Activated CD4-positive, alpha-beta T cell treated with anti-CD3 and anti-CD28 coated beads for 36 hours (primary cell): ENCODE measurements at regions of chr2 and their contacts with region 1.

Region 1: GRCh38 chr2:196263181-196263747 is 91.9 kb upstream of the STK17B start:
- DNase-seq: peak; percentile 51
- ATAC-seq: peak; percentile 62
- H3K4me3 Mint-ChIP-seq: peak overlapping the region; percentile 70
- H3K27ac Mint-ChIP-seq: peak overlapping the region; percentile 95
- H3K4me1 Mint-ChIP-seq: peaks cover 86% of the 10 kb centered on the region
- H3K27me3 Mint-ChIP-seq: no peaks in the 10 kb centered on the region

Region 2: GRCh38 chr2:196171248-196171871 is 91.9 kb before region 1 on chr2 and contains the start of gene STK17B:
- CTCF ChIA-PET with region 1: interaction called, 6 read pairs
- POLR2A ChIA-PET with region 1: interaction called, 7 read pairs
- intact Hi-C with region 1: loop called (anchors 1 to 2 kb)
- DNase-seq: peak; percentile 99
- ATAC-seq: peak; percentile 76
- H3K4me3 Mint-ChIP-seq: peak within 1 kb of the TSS; percentile 92
- H3K27ac Mint-ChIP-seq: peak within 1 kb of the TSS; percentile 98
- H3K4me1 Mint-ChIP-seq: peaks cover 38% of the 10 kb centered on the region
- H3K27me3 Mint-ChIP-seq: no peaks in the 10 kb centered on the region
- total RNA-seq, gene STK17B: 159 to 178 TPM

Region 3: GRCh38 chr2:196205881-196206435 is 57.3 kb before region 1 on chr2:
- CTCF ChIA-PET with region 1: interaction called, 6 read pairs
- POLR2A ChIA-PET with region 1: interaction called, 4 read pairs
- intact Hi-C with region 1: loop called (anchors 1 kb)
- DNase-seq: no peak
- ATAC-seq: no peak
- H3K4me3 Mint-ChIP-seq: no peak overlapping the region
- H3K27ac Mint-ChIP-seq: peak overlapping the region; percentile 35
- H3K4me1 Mint-ChIP-seq: peaks cover 45% of the 10 kb centered on the region
- H3K27me3 Mint-ChIP-seq: no peaks in the 10 kb centered on the region

Region 4: DNA sequence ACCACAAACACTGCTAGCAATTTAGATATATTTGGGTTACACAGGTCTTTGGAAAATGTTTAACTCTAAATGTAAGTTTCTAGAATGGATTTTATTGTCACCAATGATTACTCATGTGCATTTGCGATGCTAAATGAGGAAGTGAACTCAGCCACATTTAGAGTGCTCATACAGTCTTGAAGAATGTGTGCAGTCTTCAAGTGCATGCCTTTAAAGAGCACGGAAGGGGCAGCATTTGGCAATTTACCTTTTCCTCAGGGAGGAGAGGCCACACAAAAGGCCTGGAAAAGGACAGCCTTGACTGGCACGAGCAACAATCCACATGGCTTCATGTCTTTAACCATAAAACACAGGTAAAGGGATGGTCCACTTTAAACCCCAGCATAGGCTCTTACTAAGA is 13.4 kb before region 1 on chr2:
- CTCF ChIA-PET with region 1: interaction called, 15 read pairs
- POLR2A ChIA-PET with region 1: interaction called, 6 read pairs
- intact Hi-C with region 1: loop called in 1 of 2 experiments (anchors 1 kb)
- DNase-seq: no peak
- ATAC-seq: peak; percentile 24
- H3K4me3 Mint-ChIP-seq: no peak overlapping the region
- H3K27ac Mint-ChIP-seq: peak overlapping the region; percentile 72
- H3K4me1 Mint-ChIP-seq: peaks cover 88% of the 10 kb centered on the region
- H3K27me3 Mint-ChIP-seq: no peaks in the 10 kb centered on the region

Region 5: DNA sequence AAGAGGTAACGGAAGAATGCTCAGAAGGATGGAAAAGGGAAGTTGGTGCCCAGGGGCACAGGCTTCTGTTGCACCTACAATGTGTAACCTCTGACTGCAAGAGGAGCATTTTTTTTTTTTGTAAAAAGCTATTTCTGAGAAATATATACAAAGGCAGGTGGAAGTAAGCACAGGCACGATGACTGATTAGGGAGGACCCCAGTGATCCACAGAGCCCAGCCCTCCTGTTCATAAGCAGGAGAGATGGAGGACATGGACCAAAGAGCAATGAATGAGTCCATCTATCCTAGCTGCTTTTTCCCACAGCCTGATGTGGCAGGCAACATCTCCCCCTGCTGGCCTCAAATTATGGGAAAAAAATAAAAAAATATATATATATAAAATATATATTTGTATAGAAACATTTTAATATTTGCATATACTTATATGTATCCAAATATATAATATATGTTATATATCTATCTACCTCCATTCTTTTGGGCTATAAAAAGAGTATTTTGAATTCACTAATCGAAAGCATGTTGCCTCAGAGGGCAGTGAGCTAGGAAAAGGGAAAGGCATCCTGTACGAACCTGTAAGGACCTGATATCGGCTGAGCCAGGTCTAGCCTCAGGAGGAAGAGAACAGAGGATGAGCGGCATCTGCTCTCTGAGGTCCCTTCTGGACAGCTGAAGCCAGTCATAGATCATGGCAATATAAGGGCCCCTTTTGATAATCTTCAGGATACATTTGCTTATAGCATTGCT is 74.1 kb after region 1 on chr2:
- CTCF ChIA-PET with region 1: interaction called, 10 read pairs
- POLR2A ChIA-PET with region 1: no interaction called
- intact Hi-C with region 1: no loop called
- DNase-seq: peak; percentile 35
- ATAC-seq: peak; percentile 49
- H3K4me3 Mint-ChIP-seq: no peak overlapping the region
- H3K27ac Mint-ChIP-seq: no peak overlapping the region
- H3K4me1 Mint-ChIP-seq: peaks cover 9% of the 10 kb centered on the region
- H3K27me3 Mint-ChIP-seq: no peaks in the 10 kb centered on the region

Region 6: GRCh38 chr2:196370381-196370780 is 107.1 kb after region 1 on chr2:
- CTCF ChIA-PET with region 1: no interaction called
- POLR2A ChIA-PET with region 1: no interaction called
- intact Hi-C with region 1: no loop called
- DNase-seq: no peak
- ATAC-seq: no peak
- H3K4me3 Mint-ChIP-seq: no peak overlapping the region
- H3K27ac Mint-ChIP-seq: no peak overlapping the region
- H3K4me1 Mint-ChIP-seq: peaks cover 2% of the 10 kb centered on the region
- H3K27me3 Mint-ChIP-seq: peaks cover 2% of the 10 kb centered on the region

Region 7: GRCh38 chr2:196544906-196545433 is 281.7 kb after region 1 on chr2:
- CTCF ChIA-PET with region 1: no interaction called
- POLR2A ChIA-PET with region 1: no interaction called
- intact Hi-C with region 1: no loop called
- DNase-seq: no peak
- ATAC-seq: no peak
- H3K4me3 Mint-ChIP-seq: no peak overlapping the region
- H3K27ac Mint-ChIP-seq: no peak overlapping the region
- H3K4me1 Mint-ChIP-seq: no peaks in the 10 kb centered on the region
- H3K27me3 Mint-ChIP-seq: peaks cover 7% of the 10 kb centered on the region